ENCODE measurements at regions of chr1 and their contacts with region 1.

Region 1: DNA sequence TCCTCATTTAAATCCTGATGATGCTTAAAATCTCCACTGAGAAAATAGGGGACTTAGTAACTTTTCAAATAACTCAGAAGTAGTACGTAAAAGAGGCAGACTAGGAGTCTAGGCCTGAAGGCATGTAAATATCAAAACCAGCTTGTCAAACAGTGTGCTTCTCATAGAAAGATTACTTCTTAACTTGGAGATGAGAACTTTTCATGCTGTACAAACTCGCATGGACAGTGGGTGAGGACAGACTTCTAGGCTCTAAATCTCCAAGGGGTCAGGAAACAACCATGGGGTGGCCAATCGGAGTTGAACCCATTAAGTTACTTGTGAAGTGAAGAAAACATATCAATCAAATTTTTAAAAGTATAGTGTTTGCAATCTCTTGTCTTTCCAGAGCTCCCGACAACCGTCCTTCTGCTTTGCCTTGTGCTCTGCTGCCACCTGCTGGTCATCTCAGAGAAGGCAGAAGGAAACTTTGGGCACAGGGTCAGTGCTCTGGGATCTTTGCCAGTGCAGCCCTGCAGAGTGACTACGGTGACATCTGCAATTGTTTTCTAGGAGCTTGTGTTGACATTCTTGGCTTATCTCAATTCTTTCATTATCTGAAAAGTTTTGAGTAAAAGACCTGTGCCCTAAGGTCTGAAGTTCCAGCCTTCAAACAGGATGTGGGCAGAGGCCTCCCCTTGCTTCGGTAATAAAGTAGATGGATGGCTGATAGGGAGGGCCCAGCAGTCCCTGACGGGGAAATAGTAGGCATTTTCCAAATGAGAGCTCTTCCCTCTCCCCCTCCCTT is 105.1 kb upstream of the PDE4B start:
- DNase-seq: peak; percentile 72 to 96 (median 91)
- ATAC-seq: peak; percentile 91 to 99 (median 97)
- H3K4me3 ChIP-seq: no peak overlapping the region
- H3K27ac ChIP-seq: no peak overlapping the region
- H3K4me1 ChIP-seq: no peaks in the 10 kb centered on the region
- H3K27me3 ChIP-seq: no peaks in the 10 kb centered on the region
- CTCF ChIP-seq: peak; percentile 92 to 97 (median 95)

Region 2: DNA sequence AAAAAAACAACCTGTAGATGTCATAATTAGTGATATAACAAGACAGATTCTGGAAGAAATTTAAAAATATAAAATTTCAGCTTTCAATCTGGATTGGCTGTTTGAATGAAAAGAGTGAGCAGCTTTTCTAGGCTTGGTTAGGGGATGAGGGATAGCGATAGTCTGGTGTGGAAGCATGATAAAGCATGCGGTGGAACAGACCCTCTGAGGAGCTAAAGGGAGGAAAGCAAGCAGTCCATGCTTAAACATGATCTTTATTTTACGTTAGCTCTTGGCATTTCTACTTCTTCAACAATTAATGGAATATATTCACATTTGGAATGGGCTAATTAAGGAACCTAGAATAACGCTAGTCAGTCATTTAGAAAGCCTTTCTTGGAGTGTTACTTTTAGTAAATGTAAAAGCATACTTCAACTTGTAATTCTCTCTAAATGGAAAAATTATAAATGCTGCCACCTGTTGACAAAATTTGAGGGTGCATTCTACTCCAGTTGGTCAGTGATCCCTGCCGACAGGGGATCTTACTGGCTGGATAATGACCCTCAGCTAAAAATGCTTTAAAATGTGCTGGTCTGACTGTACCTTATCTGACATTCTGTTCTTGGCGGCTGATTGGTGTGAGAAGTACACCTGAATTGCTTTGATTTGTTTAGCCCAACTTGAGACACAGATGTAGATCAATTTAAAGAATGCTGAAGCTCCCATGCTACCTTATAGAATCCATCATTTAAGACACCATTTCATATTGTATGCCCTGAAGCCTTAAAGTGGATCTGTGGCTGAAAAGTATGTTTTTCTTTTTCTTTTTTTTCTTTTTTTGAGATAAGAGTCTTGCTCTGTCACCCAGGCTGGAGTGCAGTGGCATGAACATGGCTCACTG is 478.4 kb before region 1 on chr1:
- intact Hi-C with region 1: loop called in 1 of 3 experiments (anchors 10 kb)
- DNase-seq: peak in 2 of 6 donors; percentile 17 to 29
- ATAC-seq: peak; percentile 62 to 80 (median 76)
- H3K4me3 ChIP-seq: no peak overlapping the region
- H3K27ac ChIP-seq: no peak overlapping the region
- H3K4me1 ChIP-seq: peaks cover 0 to 6% (median 0%) of the 10 kb centered on the region in 3 donors
- H3K27me3 ChIP-seq: no peaks in the 10 kb centered on the region
- CTCF ChIP-seq: peak; percentile 38 to 63 (median 52)

Region 3: DNA sequence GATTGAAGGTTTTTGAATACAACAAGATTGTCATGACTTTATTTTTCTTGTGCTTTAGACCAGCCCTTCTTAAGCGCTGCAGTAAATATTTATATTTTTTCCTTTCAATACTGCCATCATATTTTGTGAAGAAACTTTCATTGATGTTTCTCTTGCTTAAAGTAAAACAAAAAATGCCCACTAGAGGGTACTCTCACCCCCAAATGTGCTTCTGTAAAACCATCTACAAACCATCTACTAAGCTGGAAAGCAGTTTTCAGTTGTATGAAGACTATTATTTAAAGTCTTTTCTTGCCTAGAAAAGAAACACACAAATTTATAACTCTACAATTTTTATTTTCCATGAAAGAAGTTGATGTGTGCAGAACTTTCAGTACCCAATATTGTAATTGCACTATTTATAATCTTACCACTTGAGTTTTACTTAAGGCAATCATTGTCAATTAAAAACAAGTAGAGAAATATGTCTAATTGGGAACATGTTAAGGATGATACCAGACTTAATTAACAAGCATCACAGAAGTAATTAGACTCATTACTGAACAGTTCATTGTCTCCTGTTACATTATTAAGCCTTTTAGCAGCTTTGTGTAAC is 256.4 kb before region 1 on chr1:
- intact Hi-C with region 1: loop called in 1 of 3 experiments (anchors 10 kb)
- DNase-seq: no peak
- ATAC-seq: peak in 3 of 4 donors; percentile 65 to 78 (median 77)
- H3K4me3 ChIP-seq: no peak overlapping the region
- H3K27ac ChIP-seq: no peak overlapping the region
- H3K4me1 ChIP-seq: no peaks in the 10 kb centered on the region
- H3K27me3 ChIP-seq: no peaks in the 10 kb centered on the region
- CTCF ChIP-seq: peak; percentile 8 to 62 (median 26)

Region 4: DNA sequence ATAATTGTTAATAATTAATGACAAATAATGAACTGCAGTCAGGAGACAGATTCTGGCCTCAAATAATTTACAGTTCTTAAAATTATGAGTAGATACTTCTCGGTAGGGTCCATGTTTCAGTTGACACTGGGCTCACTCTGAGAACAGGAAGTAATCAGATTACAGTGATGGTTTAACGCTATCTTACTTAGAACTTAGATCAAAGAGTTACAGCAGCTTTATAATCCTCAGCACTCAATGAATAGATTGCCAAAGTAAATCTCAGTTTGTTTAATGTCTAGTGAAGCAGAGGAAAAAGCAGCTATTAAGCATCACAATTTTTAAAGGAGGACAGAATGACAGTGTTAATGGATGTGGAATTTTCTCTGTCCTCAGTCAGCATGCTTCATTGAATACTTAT is 184.7 kb after region 1 on chr1:
- intact Hi-C with region 1: no loop called
- DNase-seq: no peak
- ATAC-seq: no peak
- H3K4me3 ChIP-seq: no peak overlapping the region
- H3K27ac ChIP-seq: no peak overlapping the region
- H3K4me1 ChIP-seq: no peaks in the 10 kb centered on the region
- H3K27me3 ChIP-seq: no peaks in the 10 kb centered on the region
- CTCF ChIP-seq: no peak

Region 5: DNA sequence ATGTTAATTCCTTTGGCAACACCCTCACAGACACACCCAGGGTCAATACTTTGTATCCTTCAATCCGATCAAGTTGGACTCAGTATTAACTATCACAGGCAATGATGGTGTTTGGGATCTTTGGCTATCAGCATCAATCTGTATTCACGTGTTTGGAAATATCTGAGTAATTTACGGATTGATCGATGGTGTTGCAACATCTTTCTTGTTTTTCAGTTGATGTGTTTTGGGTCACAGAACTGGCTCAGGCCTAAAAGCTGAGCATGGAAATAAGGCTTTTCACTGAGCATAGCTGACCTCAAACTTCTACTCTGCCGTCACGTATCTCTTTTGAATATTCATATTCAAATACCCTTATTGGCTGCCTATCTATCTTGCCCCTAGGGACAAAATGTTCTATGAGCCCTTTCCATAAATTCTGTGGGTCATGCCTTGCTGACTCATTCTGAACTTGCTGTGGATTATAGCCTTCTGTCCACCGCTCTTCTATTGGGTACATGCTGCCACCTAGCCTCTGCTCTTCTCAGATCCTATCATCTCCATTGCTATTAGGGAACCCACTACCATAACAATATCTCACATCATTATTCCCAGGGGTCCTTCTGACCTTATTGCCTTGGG is 261.1 kb after region 1 on chr1:
- intact Hi-C with region 1: no loop called
- DNase-seq: no peak
- ATAC-seq: peak in 3 of 4 donors; percentile 41 to 62 (median 45)
- H3K4me3 ChIP-seq: no peak overlapping the region
- H3K27ac ChIP-seq: no peak overlapping the region
- H3K4me1 ChIP-seq: no peaks in the 10 kb centered on the region
- H3K27me3 ChIP-seq: no peaks in the 10 kb centered on the region
- CTCF ChIP-seq: no peak

Region 6: DNA sequence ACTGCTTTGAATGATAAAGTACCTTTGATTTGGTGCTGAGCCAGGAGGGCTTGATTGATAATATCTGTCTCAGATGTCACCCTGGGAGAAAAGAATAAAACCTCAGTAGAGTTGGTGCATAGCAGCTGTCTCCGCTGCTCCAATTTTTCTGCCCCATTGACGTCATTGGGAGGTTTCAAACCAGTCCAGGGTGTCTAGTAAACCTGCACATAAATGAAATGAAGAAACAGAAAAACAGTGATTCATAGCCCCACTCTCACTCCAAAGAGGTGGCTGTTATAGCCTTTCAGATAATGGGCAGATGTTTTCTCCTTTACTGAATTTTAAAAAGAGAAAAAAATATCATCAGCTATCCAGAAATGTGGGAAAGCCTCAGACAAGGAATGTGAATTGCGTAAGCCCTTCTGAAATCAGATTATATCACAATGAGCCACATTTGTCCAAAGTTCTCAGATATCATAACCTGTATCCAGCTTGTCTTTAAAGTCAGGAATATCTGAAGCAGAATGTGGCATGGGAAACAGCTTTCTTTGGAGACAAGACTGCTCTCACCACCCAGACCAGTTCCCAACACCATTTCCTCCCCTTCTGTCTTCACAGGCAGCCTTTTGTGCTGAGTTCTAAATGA is 495.0 kb after region 1 on chr1:
- intact Hi-C with region 1: no loop called
- DNase-seq: no peak
- ATAC-seq: peak in 3 of 4 donors; percentile 43 to 58 (median 55)
- H3K4me3 ChIP-seq: no peak overlapping the region
- H3K27ac ChIP-seq: no peak overlapping the region
- H3K4me1 ChIP-seq: no peaks in the 10 kb centered on the region
- H3K27me3 ChIP-seq: no peaks in the 10 kb centered on the region
- CTCF ChIP-seq: no peak